ENCODE measurements at regions of chr18 and their contacts with region 1.

Region 1: GRCh38 chr18:2070619-2071018 is 500.7 kb downstream of the METTL4 start:
- DNase-seq: no peak
- ATAC-seq: no peak
- H3K4me3 ChIP-seq: no peak overlapping the region
- H3K4me3 Mint-ChIP-seq: no peak overlapping the region
- H3K27ac ChIP-seq: no peak overlapping the region
- H3K27ac Mint-ChIP-seq: no peak overlapping the region
- H3K4me1 ChIP-seq: no peaks in the 10 kb centered on the region
- H3K4me1 Mint-ChIP-seq: no peaks in the 10 kb centered on the region
- H3K27me3 ChIP-seq: no peaks in the 10 kb centered on the region
- H3K27me3 Mint-ChIP-seq: peaks cover 0 to 10% of the 10 kb centered on the region in 2 donors

Region 2: DNA sequence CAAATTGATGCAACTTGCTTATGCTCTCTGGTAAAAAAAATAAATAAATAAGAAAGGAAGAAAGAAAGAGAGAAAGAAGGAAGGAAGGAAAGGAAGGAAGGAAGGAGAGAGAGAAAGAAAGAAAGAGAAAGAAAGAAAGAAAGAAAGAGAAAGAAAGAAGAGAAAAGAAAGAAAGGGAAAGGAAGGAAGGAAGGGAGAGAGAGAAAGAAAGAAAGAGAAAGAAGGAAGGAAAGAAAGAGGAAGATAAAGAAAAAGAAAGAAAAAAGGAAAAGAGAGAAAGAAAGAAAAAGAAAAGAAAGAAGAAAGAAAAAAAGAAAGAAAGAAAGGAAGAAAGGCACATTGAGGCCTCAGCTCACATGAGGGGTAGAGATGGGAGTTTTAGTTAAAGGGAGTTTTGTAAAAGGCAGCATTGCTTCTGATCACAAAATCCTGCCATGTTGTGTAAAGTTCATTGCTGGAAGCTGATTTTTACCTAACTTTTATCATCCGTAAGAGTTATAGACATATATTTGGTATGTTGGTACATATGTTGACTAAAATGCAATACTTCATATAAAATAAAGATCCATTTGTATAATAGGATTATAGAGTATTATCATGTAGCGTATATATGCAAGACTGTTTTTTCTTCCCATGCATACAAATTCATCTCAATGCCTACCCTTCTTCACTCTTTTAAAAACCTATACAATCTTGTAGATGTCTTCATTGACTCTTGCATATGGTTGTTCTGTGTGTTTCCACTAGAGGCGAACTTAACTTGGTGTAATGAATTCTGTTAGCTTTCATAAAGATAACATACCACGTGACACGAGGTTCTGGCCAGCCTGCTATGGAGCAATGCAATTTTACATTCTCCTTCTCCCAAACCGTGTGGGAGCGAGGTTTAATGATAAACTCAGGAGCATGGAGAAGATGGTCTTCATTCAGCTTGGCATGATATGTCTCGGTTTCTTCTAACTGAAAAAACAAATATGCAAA is 1116.3 kb after region 1 on chr18:
- CTCF ChIA-PET with region 1: no interaction called
- POLR2A ChIA-PET with region 1: interaction called in 1 of 2 experiments, 19 read pairs
- DNase-seq: no peak
- ATAC-seq: no peak
- H3K4me3 ChIP-seq: no peak overlapping the region
- H3K4me3 Mint-ChIP-seq: no peak overlapping the region
- H3K27ac ChIP-seq: no peak overlapping the region
- H3K27ac Mint-ChIP-seq: no peak overlapping the region
- H3K4me1 ChIP-seq: no peaks in the 10 kb centered on the region
- H3K4me1 Mint-ChIP-seq: no peaks in the 10 kb centered on the region
- H3K27me3 ChIP-seq: no peaks in the 10 kb centered on the region
- H3K27me3 Mint-ChIP-seq: no peaks in the 10 kb centered on the region